Sigmoid colon (tissue), 7 donors: ENCODE measurements at regions of chr3 and their contacts with region 1.

Region 1: GRCh38 chr3:188076176-188076575 is 77.8 kb upstream of the LPP start:
- DNase-seq: peak; percentile 64
- H3K4me3 ChIP-seq: no peak overlapping the region
- H3K27ac ChIP-seq: peak overlapping the region in 2 of 4 donors; percentile 28 to 63
- H3K4me1 ChIP-seq: peaks cover 0 to 5% (median 0%) of the 10 kb centered on the region in 4 donors
- H3K27me3 ChIP-seq: no peaks in the 10 kb centered on the region
- CTCF ChIP-seq: no peak
- EP300 ChIP-seq: peak; percentile 52 to 85 (median 57)
- POLR2A ChIP-seq: no peak

Region 2: DNA sequence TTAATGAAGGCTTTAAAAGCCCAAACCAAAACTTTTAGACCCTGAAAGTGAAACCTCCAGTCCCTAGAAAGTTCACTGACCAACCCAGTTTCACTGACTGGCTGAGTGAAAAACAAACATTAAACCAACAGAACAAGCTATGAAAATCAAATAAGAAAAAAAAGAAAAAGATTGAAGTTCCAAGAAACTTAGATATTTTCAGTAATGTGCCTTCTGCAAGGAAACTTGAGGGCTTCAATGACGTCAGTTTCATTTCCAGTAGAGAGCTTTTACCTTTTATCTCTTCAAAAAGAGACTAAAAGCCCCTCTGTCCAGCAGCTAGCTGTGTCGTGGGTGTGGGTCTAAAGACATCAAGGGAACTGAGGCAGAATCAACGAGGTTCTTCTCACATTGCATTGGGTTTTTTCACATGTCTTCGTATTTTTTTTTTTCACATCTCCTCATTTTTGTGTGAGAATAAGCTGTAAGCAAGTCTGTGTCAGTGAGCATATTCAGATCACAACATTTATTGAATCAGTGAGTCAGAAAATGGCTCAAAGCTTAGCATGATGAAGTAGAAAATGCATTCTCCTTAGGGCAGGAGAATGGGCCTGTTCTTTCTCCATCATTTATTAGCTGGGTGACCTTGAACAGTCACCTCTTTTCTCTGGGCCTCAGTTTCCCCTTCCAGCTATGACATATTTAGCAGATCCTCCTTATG is 276.1 kb before region 1 on chr3:
- intact Hi-C with region 1: no loop called
- DNase-seq: no peak
- H3K4me3 ChIP-seq: no peak overlapping the region
- H3K27ac ChIP-seq: no peak overlapping the region
- H3K4me1 ChIP-seq: peaks cover 0 to 5% (median 0%) of the 10 kb centered on the region in 4 donors
- H3K27me3 ChIP-seq: no peaks in the 10 kb centered on the region
- CTCF ChIP-seq: no peak
- EP300 ChIP-seq: no peak
- POLR2A ChIP-seq: no peak

Region 3: DNA sequence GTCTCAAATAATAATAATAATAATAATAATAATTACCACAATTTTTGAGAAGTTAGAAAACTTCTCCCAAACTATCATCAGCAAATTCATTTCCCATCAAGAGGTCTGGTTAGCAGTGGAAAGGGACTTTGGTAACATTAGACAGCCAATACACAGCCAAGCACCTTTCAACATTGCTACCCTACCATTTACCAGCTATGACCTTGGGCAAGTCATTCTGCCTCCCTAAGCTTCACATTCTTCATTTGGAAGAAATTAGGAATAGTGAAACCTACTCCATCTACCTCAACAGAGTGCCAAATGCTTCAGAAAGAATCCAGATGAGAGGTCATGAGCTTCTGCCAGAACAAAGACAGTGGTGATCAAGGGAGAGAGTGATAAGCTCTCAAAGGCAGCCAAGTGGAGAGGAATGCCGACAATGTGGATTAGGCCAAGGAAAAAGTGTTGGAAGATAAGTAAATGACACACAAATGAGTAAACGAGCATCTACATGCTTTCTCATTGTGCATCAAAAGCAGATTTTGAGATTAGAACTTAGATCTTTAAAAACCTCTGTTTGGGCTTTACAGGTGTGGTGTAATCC is 34.9 kb after region 1 on chr3:
- intact Hi-C with region 1: loop called (anchors 5 kb)
- DNase-seq: no peak
- H3K4me3 ChIP-seq: no peak overlapping the region
- H3K27ac ChIP-seq: no peak overlapping the region
- H3K4me1 ChIP-seq: no peaks in the 10 kb centered on the region
- H3K27me3 ChIP-seq: no peaks in the 10 kb centered on the region
- CTCF ChIP-seq: no peak
- EP300 ChIP-seq: no peak
- POLR2A ChIP-seq: no peak

Region 4: DNA sequence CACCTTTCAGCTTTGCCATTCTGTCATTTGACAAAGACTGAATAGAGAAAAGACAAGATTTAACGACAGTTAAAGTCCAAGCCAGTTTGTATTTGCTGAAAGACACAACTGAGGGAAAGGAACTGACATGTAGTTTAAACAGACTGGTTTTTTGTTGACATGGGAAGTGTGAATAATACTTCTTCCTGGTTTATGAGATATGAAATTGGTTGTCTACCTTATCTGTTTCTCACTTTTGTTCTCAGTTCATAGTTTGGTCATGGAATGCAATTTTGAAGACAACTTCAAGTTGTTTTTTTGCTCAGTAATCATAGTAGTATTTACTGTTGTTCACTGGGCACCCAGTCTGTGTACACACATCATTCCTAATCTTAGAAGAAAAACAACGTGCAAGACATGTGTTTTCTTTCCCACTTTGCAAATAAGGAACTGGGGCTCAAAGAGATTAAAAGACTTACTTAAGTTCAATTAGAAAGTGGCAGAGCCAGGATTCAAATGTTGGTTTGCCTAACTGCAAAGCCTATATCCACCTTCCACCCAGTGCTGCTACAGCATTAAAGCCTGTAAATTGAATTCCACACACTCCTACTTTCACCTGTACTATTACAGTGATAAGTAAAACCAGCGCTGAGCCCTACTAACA is 181.3 kb after region 1 on chr3:
- intact Hi-C with region 1: no loop called
- DNase-seq: no peak
- H3K4me3 ChIP-seq: no peak overlapping the region
- H3K27ac ChIP-seq: peak overlapping the region; percentile 88 to 94 (median 90)
- H3K4me1 ChIP-seq: peaks cover 0 to 89% (median 86%) of the 10 kb centered on the region in 4 donors
- H3K27me3 ChIP-seq: no peaks in the 10 kb centered on the region
- CTCF ChIP-seq: no peak
- EP300 ChIP-seq: no peak
- POLR2A ChIP-seq: no peak

Region 5: GRCh38 chr3:189132231-189132707 is 1056.1 kb after region 1 on chr3:
- intact Hi-C with region 1: no loop called
- DNase-seq: peak; percentile 70
- H3K4me3 ChIP-seq: peak overlapping the region in 1 of 4 donors; percentile 7
- H3K27ac ChIP-seq: peak overlapping the region; percentile 31 to 73 (median 68)
- H3K4me1 ChIP-seq: peaks cover 0 to 23% (median 16%) of the 10 kb centered on the region in 4 donors
- H3K27me3 ChIP-seq: no peaks in the 10 kb centered on the region
- CTCF ChIP-seq: no peak
- EP300 ChIP-seq: no peak
- POLR2A ChIP-seq: no peak